Ascending aorta (tissue), 2 donors: ENCODE measurements at regions of chr19 and their contacts with region 1.

Region 1: GRCh38 chr19:11293433-11294389 is 2.2 kb upstream of the TSPAN16 start:
- DNase-seq: peak; percentile 88 to 99
- H3K4me3 ChIP-seq: peak overlapping the region in 1 of 2 donors; percentile 22
- H3K27ac ChIP-seq: peak overlapping the region; percentile 42 to 61
- H3K4me1 ChIP-seq: peaks cover 0 to 7% of the 10 kb centered on the region in 2 donors
- H3K27me3 ChIP-seq: no peaks in the 10 kb centered on the region
- CTCF ChIP-seq: peak; percentile 99

Region 2: GRCh38 chr19:11059511-11060358 is 234.0 kb before region 1 on chr19:
- intact Hi-C with region 1: no loop called
- DNase-seq: no peak
- H3K4me3 ChIP-seq: no peak overlapping the region
- H3K27ac ChIP-seq: no peak overlapping the region
- H3K4me1 ChIP-seq: no peaks in the 10 kb centered on the region
- H3K27me3 ChIP-seq: no peaks in the 10 kb centered on the region
- CTCF ChIP-seq: no peak

Region 3: GRCh38 chr19:11279496-11280236 is 14.0 kb before region 1 on chr19:
- intact Hi-C with region 1: no loop called
- DNase-seq: no peak
- H3K4me3 ChIP-seq: no peak overlapping the region
- H3K27ac ChIP-seq: no peak overlapping the region
- H3K4me1 ChIP-seq: no peaks in the 10 kb centered on the region
- H3K27me3 ChIP-seq: no peaks in the 10 kb centered on the region
- CTCF ChIP-seq: no peak

Region 4: DNA sequence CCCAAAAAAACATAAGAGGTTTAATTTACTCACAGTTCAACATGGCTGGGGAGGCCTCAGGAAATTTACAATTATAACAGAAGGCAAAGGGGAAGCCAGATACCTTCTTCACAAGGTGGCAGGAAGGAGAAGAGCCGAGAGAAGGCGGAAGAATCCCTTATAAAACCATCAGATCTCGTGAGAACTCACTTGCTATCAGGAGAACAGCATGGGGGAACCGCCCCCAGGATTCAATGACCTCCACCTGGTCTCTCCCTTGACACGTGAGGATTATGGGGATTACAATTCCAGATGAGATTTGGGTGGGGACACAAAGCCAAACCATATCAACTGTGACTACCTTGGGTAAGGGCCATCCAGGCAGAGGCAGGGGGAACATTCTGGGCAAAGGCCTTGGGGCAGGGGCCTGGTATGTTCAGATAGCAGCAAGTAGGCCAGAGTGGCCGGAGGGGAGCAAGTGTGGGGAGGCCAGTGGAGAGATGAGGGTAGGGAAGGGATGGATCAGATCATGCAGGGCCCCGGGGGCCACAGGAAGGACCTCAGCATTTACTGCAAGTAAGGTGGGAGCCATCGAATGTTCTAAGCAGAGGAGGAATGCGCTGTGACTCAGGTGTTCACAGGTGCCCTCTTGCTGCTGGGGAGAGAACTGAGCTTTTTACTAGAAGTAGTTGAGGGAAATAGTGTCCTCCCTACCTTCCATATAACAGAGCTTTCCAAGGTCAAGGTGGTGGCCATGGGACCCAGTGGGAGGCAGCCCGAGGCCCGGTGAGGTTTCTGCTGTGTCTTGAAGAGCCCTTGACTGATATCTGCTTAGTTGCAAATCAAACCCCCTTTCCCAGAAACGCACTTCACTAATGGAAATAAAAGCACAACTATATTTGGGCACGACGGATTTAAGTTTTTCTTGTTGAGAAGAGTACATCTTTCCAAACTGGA is 27.7 kb after region 1 on chr19:
- intact Hi-C with region 1: loop called (anchors 2 kb)
- DNase-seq: no peak
- H3K4me3 ChIP-seq: no peak overlapping the region
- H3K27ac ChIP-seq: no peak overlapping the region
- H3K4me1 ChIP-seq: peaks cover 8 to 13% of the 10 kb centered on the region in 2 donors
- H3K27me3 ChIP-seq: no peaks in the 10 kb centered on the region
- CTCF ChIP-seq: no peak

Region 5: GRCh38 chr19:11355160-11356073 is 61.7 kb after region 1 on chr19 and contains the start of gene PLPPR2:
- intact Hi-C with region 1: loop called (anchors 5 kb)
- DNase-seq: peak; percentile 88 to 98
- H3K4me3 ChIP-seq: peak within 1 kb of the TSS; percentile 60 to 85
- H3K27ac ChIP-seq: peak within 1 kb of the TSS; percentile 73 to 77
- H3K4me1 ChIP-seq: peaks cover 3 to 10% of the 10 kb centered on the region in 2 donors
- H3K27me3 ChIP-seq: no peaks in the 10 kb centered on the region
- CTCF ChIP-seq: no peak
- total RNA-seq, gene PLPPR2: 61.4 TPM

Region 6: GRCh38 chr19:11446652-11447301 is 153.1 kb after region 1 on chr19:
- intact Hi-C with region 1: loop called (anchors 1 kb)
- DNase-seq: no peak
- H3K4me3 ChIP-seq: no peak overlapping the region
- H3K27ac ChIP-seq: no peak overlapping the region
- H3K4me1 ChIP-seq: no peaks in the 10 kb centered on the region
- H3K27me3 ChIP-seq: no peaks in the 10 kb centered on the region
- CTCF ChIP-seq: peak; percentile 71 to 88 (median 77)

Region 7: GRCh38 chr19:11587302-11587974 is 293.7 kb after region 1 on chr19:
- intact Hi-C with region 1: loop called (anchors 5 kb)
- DNase-seq: peak in 1 of 2 donors; percentile 82
- H3K4me3 ChIP-seq: no peak overlapping the region
- H3K27ac ChIP-seq: no peak overlapping the region
- H3K4me1 ChIP-seq: peaks cover 0 to 2% of the 10 kb centered on the region in 2 donors
- H3K27me3 ChIP-seq: no peaks in the 10 kb centered on the region
- CTCF ChIP-seq: peak; percentile 88 to 91 (median 89)